ENCODE measurements at regions of chr10 and their contacts with region 1.

Region 1: GRCh38 chr10:131387018-131387529 is 75.6 kb upstream of the TCERG1L start:
- DNase-seq: no peak
- H3K4me3 ChIP-seq: no peak overlapping the region
- H3K27ac ChIP-seq: no peak overlapping the region
- H3K4me1 ChIP-seq: no peaks in the 10 kb centered on the region
- H3K27me3 ChIP-seq: peaks cover 0 to 29% of the 10 kb centered on the region in 2 donors
- CTCF ChIP-seq: no peak
- POLR2A ChIP-seq: no peak

Region 2: DNA sequence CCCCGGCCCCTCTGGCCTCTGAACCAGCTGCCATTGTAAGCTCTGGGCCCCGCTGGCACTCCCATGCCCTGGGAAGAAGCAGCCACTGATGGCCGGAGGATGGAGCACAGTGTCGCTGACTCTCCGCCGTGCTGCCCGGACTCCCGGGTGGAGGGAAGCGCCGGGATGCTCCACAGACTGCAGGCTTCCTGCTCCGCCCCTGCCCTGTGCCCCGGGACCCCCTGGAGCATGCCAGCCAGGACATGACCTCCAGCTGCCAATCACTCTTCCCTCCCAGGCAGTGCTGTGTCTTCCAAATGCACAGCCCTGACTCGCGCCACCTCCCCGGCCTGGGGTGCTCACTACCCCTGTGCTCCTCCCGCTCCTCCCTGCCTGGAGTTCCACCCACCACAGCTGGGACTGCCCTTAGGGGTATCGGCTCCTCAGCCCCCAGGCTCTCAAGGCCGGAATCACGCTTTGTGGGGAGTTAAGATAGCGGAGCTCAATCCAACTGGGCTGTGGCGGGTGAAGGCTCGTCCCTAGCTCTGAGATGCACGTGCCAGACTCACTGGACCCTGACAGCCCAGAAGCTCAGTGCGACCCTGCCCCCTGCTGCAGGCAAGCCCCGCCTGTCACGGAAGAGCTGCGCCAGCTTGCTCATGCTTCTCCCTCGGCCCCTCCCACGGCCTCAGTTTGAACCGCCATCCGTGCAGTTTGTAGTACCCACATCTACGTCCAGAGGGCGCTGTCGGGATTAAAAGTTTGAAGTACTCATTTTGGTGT is 66.7 kb after region 1 on chr10:
- intact Hi-C with region 1: no loop called
- DNase-seq: peak in 1 of 2 donors; percentile 74
- H3K4me3 ChIP-seq: peak overlapping the region; percentile 4 to 52 (median 12)
- H3K27ac ChIP-seq: no peak overlapping the region
- H3K4me1 ChIP-seq: no peaks in the 10 kb centered on the region
- H3K27me3 ChIP-seq: peaks cover 0 to 51% of the 10 kb centered on the region in 2 donors
- CTCF ChIP-seq: peak in 2 of 3 donors; percentile 52 to 62
- POLR2A ChIP-seq: no peak

Region 3: GRCh38 chr10:132802694-132803320 is 1415.7 kb after region 1 on chr10:
- intact Hi-C with region 1: loop called (anchors 5 kb)
- DNase-seq: no peak
- H3K4me3 ChIP-seq: no peak overlapping the region
- H3K27ac ChIP-seq: no peak overlapping the region
- H3K4me1 ChIP-seq: no peaks in the 10 kb centered on the region
- H3K27me3 ChIP-seq: peaks cover 0 to 32% of the 10 kb centered on the region in 2 donors
- CTCF ChIP-seq: no peak
- POLR2A ChIP-seq: no peak

Measured in breast epithelium (tissue), 4 donors.